Naive thymus-derived CD4-positive, alpha-beta T cell (primary cell): ENCODE measurements at regions of chr1 and their contacts with region 1.

Region 1: GRCh38 chr1:207853372-207853757 is 57.6 kb downstream of the CD34 start:
- DNase-seq: no peak
- ATAC-seq: no peak
- H3K4me3 ChIP-seq: no peak overlapping the region
- H3K4me3 Mint-ChIP-seq: peak overlapping the region in 9 of 10 donors; percentile 3 to 72 (median 62)
- H3K27ac ChIP-seq: no peak overlapping the region
- H3K27ac Mint-ChIP-seq: peak overlapping the region in 8 of 9 donors; percentile 14 to 88 (median 60)
- H3K4me1 ChIP-seq: peaks cover 55 to 76% of the 10 kb centered on the region in 2 donors
- H3K4me1 Mint-ChIP-seq: peaks cover 75 to 94% (median 83%) of the 10 kb centered on the region in 7 donors
- H3K27me3 ChIP-seq: no peaks in the 10 kb centered on the region
- H3K27me3 Mint-ChIP-seq: no peaks in the 10 kb centered on the region

Region 2: GRCh38 chr1:207863893-207864535 is 10.6 kb after region 1 on chr1:
- CTCF ChIA-PET with region 1: interaction called, 6 read pairs
- POLR2A ChIA-PET with region 1: interaction called, 8 read pairs
- intact Hi-C with region 1: loop called (anchors 1 to 2 kb)
- DNase-seq: peak in 7 of 9 donors; percentile 35 to 62 (median 59)
- ATAC-seq: peak; percentile 69
- H3K4me3 ChIP-seq: peak overlapping the region; percentile 2
- H3K4me3 Mint-ChIP-seq: peak overlapping the region in 9 of 10 donors; percentile 35 to 95 (median 67)
- H3K27ac ChIP-seq: peak overlapping the region; percentile 78
- H3K27ac Mint-ChIP-seq: peak overlapping the region in 8 of 9 donors; percentile 71 to 97 (median 90)
- H3K4me1 ChIP-seq: peaks cover 60 to 74% of the 10 kb centered on the region in 2 donors
- H3K4me1 Mint-ChIP-seq: peaks cover 3 to 67% (median 56%) of the 10 kb centered on the region in 7 donors
- H3K27me3 ChIP-seq: no peaks in the 10 kb centered on the region
- H3K27me3 Mint-ChIP-seq: no peaks in the 10 kb centered on the region

Region 3: DNA sequence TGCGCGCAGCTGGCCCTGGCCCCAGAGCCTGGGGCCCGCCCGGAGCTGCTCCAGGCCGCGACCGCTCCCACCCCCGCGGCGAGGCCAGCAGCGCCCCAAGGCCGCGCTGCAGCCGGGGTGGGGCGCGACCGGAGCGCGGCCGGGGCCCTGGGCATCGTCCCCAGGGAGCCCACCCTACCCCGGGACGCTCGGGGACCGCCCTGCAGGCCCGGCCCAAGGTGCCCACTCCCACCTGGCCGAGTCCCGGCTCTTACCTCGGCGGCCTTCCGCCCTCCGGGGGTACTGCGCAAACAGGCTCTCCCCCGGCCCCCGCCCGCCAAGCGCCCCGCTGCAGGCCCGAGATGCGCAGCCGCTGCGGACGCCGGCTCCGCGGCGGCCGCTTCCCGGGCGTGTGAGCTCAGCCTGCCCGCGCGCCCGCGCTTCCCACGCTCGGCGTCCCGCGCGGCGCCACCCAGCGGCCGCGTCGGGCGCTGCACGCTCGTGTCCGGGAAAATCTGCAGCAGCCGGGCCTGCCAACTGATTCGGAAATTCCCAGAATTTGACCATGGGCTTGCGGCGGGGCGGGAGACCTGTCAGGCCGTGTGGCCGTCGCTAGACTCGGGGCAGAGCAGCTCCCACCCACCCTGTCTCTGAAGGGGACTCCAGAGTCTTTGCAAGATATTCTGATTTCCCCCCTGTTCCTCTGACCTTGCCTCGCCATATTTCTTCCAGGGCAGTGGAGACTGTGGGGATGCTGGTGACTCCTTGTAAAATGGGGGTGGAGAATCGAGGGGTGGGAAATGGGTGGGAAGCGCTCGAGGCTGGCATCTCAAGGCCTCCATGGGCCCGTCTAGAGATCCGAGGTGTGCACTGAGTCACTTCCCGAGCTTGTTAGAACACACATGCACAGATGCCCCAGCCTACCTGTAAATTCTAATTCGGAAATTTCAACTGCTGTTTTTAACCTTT is 15.7 kb after region 1 on chr1:
- CTCF ChIA-PET with region 1: interaction called, 6 read pairs
- POLR2A ChIA-PET with region 1: interaction called, 8 read pairs
- intact Hi-C with region 1: loop called (anchors 2 kb)
- DNase-seq: peak; percentile 57 to 86 (median 79)
- ATAC-seq: peak; percentile 79
- H3K4me3 ChIP-seq: peak overlapping the region; percentile 86
- H3K4me3 Mint-ChIP-seq: peak overlapping the region; percentile 74 to 99 (median 94)
- H3K27ac ChIP-seq: peak overlapping the region; percentile 78
- H3K27ac Mint-ChIP-seq: peak overlapping the region; percentile 91 to 98 (median 93)
- H3K4me1 ChIP-seq: peaks cover 39 to 80% of the 10 kb centered on the region in 2 donors
- H3K4me1 Mint-ChIP-seq: peaks cover 52 to 85% (median 77%) of the 10 kb centered on the region in 7 donors
- H3K27me3 ChIP-seq: no peaks in the 10 kb centered on the region
- H3K27me3 Mint-ChIP-seq: no peaks in the 10 kb centered on the region